GM18951 (cell line): ENCODE measurements at regions of chr7 and their contacts with region 1.

Region 1: DNA sequence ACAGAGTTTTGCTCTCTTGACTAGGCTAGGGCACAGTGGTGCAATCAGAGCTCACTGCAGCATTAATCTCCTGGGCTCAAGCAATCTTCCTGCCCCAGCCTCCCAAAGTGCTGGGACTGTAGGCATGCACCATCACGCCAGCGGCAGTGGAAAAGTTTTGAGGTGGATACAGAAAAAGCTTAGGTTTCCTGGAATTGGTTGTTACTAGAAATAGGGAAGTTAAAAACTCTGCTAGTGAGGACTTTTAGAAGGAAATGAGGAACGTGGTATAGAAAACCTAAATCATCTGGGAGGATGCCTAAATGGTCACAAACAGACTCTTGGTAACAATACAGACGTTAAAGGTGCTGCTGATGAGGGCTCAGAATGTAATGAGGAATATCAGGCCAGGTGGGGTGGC is 10.9 kb upstream of the SNX8 start:
- POLR2A ChIP-seq: no peak

Region 2: GRCh38 chr7:2063575-2064257 is 261.4 kb before region 1 on chr7:
- in situ Hi-C with region 1: loop called (anchors 25 kb)
- POLR2A ChIP-seq: no peak